Activated CD8-positive, alpha-beta memory T cell treated with anti-CD3 and anti-CD28 coated beads, Interleukin-2, amount 10 ng/mL, durations not matched to agents 7 days and 5 days (primary cell): ENCODE measurements at regions of chr11 and their contacts with region 1.

Region 1: GRCh38 chr11:121482231-121483129 is 29.7 kb upstream of the SORL1-AS1 start:
- DNase-seq: peak; percentile 84
- ATAC-seq: peak; percentile 85
- H3K4me3 Mint-ChIP-seq: peak overlapping the region; percentile 78
- H3K27ac Mint-ChIP-seq: peak overlapping the region; percentile 97
- H3K4me1 Mint-ChIP-seq: peaks cover 32% of the 10 kb centered on the region
- H3K27me3 Mint-ChIP-seq: no peaks in the 10 kb centered on the region

Region 2: DNA sequence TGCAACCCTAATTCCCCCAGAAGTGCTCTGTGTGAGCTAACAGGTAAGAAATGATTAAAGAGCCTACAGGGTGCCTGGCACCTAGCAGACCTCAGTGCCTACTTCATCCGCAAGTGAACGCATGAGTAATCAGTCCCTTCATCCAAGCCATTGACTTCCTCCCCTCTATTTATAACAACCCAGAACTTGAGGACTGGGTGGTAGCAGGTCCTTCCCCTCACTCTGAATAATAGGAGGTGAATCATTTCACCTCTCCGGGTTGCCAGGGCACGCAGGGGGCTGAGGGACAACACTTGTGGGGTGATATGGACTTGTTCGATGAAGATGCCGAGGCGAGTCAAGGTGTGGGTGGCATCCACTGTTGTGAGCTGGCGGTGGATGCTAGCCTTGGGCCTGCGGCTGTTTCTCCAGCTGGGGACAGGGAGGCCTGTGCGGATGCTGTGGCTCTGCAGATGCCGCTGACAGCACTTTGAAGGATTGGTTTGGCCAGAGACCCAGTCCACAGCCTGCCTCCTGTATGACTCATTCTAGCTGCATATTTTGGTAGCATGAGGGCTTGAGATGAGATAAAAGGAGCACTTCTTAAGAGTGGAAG is 18.0 kb before region 1 on chr11:
- CTCF ChIA-PET with region 1: interaction called, 11 read pairs
- DNase-seq: peak; percentile 88
- ATAC-seq: peak; percentile 78
- H3K4me3 Mint-ChIP-seq: peak overlapping the region; percentile 27
- H3K27ac Mint-ChIP-seq: peak overlapping the region; percentile 91
- H3K4me1 Mint-ChIP-seq: peaks cover 87% of the 10 kb centered on the region
- H3K27me3 Mint-ChIP-seq: no peaks in the 10 kb centered on the region

Region 3: DNA sequence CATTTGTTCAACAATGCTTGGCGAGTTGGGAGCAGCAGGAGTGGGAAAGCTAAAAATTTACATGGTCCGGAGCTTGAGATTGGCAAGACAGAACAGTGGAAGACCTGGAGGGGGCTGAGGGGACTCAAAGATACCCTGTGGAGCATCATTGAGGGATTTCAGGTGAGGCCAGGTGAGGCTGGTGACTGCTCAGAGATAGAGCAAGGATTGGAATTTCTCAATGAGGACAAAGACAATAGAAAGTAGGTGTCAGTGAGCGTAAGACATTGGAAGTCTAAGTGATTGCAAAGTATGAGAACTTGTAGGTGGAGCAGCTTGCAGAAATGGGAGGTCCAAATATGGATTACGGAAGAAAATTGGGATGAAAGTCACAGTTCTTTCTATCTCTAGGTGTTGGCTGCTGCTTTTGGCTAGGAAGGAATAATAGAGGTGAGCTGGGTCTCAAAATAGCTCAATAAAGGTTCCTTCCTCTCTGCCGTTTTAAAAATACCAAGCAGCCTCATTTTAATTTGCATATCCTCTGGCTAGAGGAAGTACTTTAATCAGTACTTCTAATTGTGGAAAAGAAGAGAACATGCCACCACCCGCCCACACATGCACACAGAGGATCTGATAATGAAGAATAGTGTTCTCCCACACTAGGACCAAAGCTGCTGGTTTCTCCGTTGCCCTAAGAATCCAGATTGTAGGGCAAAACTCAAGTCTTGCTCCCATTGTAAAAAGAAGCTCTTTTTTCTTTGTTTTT is 12.0 kb after region 1 on chr11:
- CTCF ChIA-PET with region 1: no interaction called
- DNase-seq: no peak
- ATAC-seq: no peak
- H3K4me3 Mint-ChIP-seq: no peak overlapping the region
- H3K27ac Mint-ChIP-seq: peak overlapping the region; percentile 45
- H3K4me1 Mint-ChIP-seq: peaks cover 13% of the 10 kb centered on the region
- H3K27me3 Mint-ChIP-seq: no peaks in the 10 kb centered on the region

Region 4: GRCh38 chr11:121844016-121844415 is 361.5 kb after region 1 on chr11:
- CTCF ChIA-PET with region 1: no interaction called
- DNase-seq: no peak
- ATAC-seq: no peak
- H3K4me3 Mint-ChIP-seq: no peak overlapping the region
- H3K27ac Mint-ChIP-seq: no peak overlapping the region
- H3K4me1 Mint-ChIP-seq: no peaks in the 10 kb centered on the region
- H3K27me3 Mint-ChIP-seq: no peaks in the 10 kb centered on the region